ENCODE measurements at regions of chr18 and their contacts with region 1.

Region 1: GRCh38 chr18:54269893-54270844 is 852 bp downstream of the POLI start:
- DNase-seq: peak; percentile 60
- H3K4me3 ChIP-seq: peak overlapping the region; percentile 39
- H3K27ac ChIP-seq: peak overlapping the region; percentile 79
- H3K4me1 ChIP-seq: no peaks in the 10 kb centered on the region
- H3K27me3 ChIP-seq: no peaks in the 10 kb centered on the region
- CTCF ChIP-seq: peak; percentile 15

Region 2: DNA sequence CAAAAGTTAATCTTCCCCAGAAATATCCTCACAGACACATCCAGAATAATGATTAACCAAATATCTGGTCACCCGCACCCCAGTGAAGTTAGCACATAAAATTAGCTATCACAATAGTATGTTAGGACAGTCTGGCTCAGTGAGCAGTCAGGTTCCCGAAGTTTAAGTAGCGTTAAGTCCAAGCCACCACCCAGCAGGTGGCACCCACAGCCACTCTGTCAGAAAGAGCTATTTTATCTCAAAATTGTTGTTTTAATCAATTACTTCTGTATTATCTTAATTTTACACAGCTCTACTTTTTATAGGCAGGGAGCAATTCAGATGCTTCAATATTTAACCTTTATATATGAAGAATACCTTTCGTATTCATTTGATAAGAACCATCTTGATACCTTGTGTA is 583.2 kb before region 1 on chr18:
- intact Hi-C with region 1: no loop called
- DNase-seq: no peak
- H3K4me3 ChIP-seq: no peak overlapping the region
- H3K27ac ChIP-seq: no peak overlapping the region
- H3K4me1 ChIP-seq: no peaks in the 10 kb centered on the region
- H3K27me3 ChIP-seq: no peaks in the 10 kb centered on the region
- CTCF ChIP-seq: no peak

Region 3: GRCh38 chr18:54173980-54174630 is 96.1 kb before region 1 on chr18:
- intact Hi-C with region 1: no loop called
- DNase-seq: no peak
- H3K4me3 ChIP-seq: no peak overlapping the region
- H3K27ac ChIP-seq: no peak overlapping the region
- H3K4me1 ChIP-seq: no peaks in the 10 kb centered on the region
- H3K27me3 ChIP-seq: no peaks in the 10 kb centered on the region
- CTCF ChIP-seq: no peak

Region 4: DNA sequence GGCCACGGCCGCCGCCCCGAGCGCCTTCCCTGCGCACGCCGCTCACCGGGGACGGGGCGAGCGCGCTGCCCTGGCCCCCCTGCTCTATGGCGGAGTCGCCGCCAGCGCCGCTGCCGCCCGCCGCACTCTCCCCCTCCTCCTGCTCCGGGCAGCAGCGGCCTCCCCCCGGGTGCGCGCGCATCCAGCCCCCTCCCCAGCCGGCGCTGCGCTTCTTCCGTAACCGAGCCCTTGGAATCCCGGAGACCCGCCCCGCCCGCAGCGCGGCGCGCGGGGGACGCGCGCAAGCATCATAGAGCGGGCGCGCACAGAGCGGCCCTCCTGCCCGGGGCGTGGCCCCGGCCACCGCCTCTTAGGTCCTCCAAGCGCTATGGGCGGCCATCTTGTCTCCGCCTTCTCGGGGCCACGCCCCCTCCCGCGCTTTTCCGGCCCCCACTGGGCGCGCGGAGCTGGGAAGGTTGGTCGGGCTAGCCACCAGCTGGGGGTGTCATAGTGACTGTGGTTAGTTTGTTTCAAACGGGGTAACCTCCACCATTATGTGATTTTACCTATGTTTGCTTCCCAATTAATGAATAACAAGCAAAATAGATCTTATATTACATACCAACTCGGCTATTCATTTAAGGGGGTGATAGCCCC is 45.7 kb before region 1 on chr18 and contains the start of gene MBD2:
- intact Hi-C with region 1: loop called (anchors 5 kb)
- DNase-seq: peak; percentile 96
- H3K4me3 ChIP-seq: peak within 1 kb of the TSS; percentile 54
- H3K27ac ChIP-seq: peak within 1 kb of the TSS; percentile 68
- H3K4me1 ChIP-seq: peaks cover 4% of the 10 kb centered on the region
- H3K27me3 ChIP-seq: no peaks in the 10 kb centered on the region
- CTCF ChIP-seq: no peak
- total RNA-seq, gene MBD2: 110 to 138 TPM